Activated CD4-positive, alpha-beta T cell treated with anti-CD3 and anti-CD28 coated beads, Interleukin-2, amount 10 ng/mL, durations not matched to agents 7 days and 5 days (primary cell): ENCODE measurements at regions of chr15 and their contacts with region 1.

Region 1: DNA sequence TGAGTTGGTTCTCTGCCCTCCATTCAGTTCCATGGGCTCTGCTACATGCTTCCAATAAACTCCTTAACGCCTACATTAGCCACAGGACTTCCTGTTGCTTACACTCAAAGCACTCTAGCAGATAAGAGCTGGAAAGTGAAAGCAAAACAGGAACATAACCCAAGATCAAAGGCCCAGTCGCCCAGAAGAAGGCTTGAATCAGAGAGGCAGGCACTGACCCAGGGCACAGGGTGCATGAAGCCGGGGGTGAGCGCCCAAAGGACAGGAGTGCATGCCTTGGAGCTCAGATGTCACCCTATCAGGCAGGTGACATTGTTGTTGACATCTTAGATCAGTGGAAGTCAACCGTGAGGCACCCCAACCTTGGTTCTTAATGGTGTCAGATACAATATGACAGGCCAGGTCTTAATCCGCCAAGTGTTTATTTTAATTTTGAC is 235.1 kb downstream of the UACA start:
- DNase-seq: peak; percentile 82
- H3K4me3 Mint-ChIP-seq: peak overlapping the region; percentile 35
- H3K27ac Mint-ChIP-seq: peak overlapping the region; percentile 90
- H3K4me1 Mint-ChIP-seq: peaks cover 56% of the 10 kb centered on the region
- H3K27me3 Mint-ChIP-seq: no peaks in the 10 kb centered on the region

Region 2: DNA sequence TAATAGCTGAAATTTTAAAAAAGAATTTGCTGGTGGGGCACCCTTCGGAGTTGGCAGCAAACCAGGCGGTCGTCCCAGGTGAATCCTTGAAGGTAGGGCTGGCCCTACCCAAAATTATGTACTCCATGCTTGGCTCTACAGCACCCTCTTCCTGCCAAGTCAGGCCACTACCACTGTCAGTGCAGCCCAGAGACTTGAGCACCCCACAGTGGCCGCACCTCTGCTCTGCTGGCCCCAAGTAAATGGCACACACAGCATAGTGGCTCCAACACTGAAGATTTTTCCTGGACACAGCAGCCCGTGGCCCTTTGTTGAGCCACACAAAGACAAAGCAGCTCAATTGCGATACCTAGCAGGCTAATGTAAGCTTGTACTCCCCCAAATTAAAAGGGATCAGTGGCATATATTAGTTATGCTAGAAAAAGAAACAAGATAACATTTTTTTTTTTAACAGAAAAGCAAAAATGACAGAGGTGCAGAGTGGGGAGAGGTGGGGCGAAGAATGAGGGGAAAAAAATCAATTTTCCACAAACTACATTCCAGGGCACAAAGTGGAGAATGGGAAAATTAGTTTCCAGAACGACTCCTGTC is 15.4 kb before region 1 on chr15:
- CTCF ChIA-PET with region 1: interaction called, 17 read pairs
- POLR2A ChIA-PET with region 1: interaction called, 4 read pairs
- DNase-seq: peak; percentile 76
- H3K4me3 Mint-ChIP-seq: no peak overlapping the region
- H3K27ac Mint-ChIP-seq: no peak overlapping the region
- H3K4me1 Mint-ChIP-seq: peaks cover 23% of the 10 kb centered on the region
- H3K27me3 Mint-ChIP-seq: peaks cover 34% of the 10 kb centered on the region

Region 3: GRCh38 chr15:70605606-70606410 is 77.5 kb after region 1 on chr15:
- CTCF ChIA-PET with region 1: no interaction called
- POLR2A ChIA-PET with region 1: no interaction called
- DNase-seq: no peak
- H3K4me3 Mint-ChIP-seq: no peak overlapping the region
- H3K27ac Mint-ChIP-seq: no peak overlapping the region
- H3K4me1 Mint-ChIP-seq: no peaks in the 10 kb centered on the region
- H3K27me3 Mint-ChIP-seq: peaks cover 3% of the 10 kb centered on the region

Region 4: GRCh38 chr15:70679919-70680231 is 151.6 kb after region 1 on chr15:
- CTCF ChIA-PET with region 1: no interaction called
- POLR2A ChIA-PET with region 1: no interaction called
- DNase-seq: no peak
- H3K4me3 Mint-ChIP-seq: no peak overlapping the region
- H3K27ac Mint-ChIP-seq: no peak overlapping the region
- H3K4me1 Mint-ChIP-seq: peaks cover 3% of the 10 kb centered on the region
- H3K27me3 Mint-ChIP-seq: peaks cover 25% of the 10 kb centered on the region